Uterus (tissue), 4 donors: ENCODE measurements at regions of chr2 and their contacts with region 1.

Region 1: GRCh38 chr2:219160186-219161017 is at the start of gene NHEJ1:
- DNase-seq: peak; percentile 98 to 99
- H3K4me3 ChIP-seq: peak within 1 kb of the TSS; percentile 77 to 94
- H3K27ac ChIP-seq: peak within 1 kb of the TSS; percentile 94 to 98
- H3K4me1 ChIP-seq: peaks cover 0 to 4% of the 10 kb centered on the region in 2 donors
- H3K27me3 ChIP-seq: no peaks in the 10 kb centered on the region
- CTCF ChIP-seq: peak; percentile 97 to 100 (median 98)
- POLR2A ChIP-seq: peak; percentile 31 to 69
- total RNA-seq, gene NHEJ1: 15.0 to 162 (median 18.1) TPM

Region 2: GRCh38 chr2:218852911-218853667 is 307.3 kb before region 1 on chr2:
- intact Hi-C with region 1: no loop called
- DNase-seq: peak in 1 of 2 donors; percentile 27
- H3K4me3 ChIP-seq: no peak overlapping the region
- H3K27ac ChIP-seq: no peak overlapping the region
- H3K4me1 ChIP-seq: no peaks in the 10 kb centered on the region
- H3K27me3 ChIP-seq: peaks cover 0 to 5% of the 10 kb centered on the region in 2 donors
- CTCF ChIP-seq: peak; percentile 30 to 52 (median 42)
- POLR2A ChIP-seq: no peak

Region 3: DNA sequence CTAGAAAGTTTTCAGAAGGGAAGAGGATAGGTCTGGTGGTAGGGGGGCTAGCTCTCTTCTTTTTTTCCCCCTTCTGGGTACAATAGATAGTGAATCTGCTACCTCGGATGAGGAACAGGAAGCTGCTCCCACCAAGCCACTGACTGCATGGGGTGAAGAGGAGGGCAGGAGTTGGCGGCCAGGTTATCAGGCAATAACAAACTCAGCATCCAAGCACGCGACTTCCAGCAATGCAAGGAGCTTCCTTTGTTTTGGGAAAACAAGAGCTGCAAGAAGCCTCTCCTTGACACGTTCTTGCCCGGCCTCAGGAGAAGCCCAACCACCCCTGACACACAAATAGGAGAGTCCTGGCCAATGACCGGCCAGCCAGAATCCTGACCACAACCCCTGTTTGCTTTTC is 32.0 kb before region 1 on chr2:
- intact Hi-C with region 1: no loop called
- DNase-seq: no peak
- H3K4me3 ChIP-seq: no peak overlapping the region
- H3K27ac ChIP-seq: no peak overlapping the region
- H3K4me1 ChIP-seq: peaks cover 0 to 4% of the 10 kb centered on the region in 2 donors
- H3K27me3 ChIP-seq: no peaks in the 10 kb centered on the region
- CTCF ChIP-seq: no peak
- POLR2A ChIP-seq: no peak

Region 4: DNA sequence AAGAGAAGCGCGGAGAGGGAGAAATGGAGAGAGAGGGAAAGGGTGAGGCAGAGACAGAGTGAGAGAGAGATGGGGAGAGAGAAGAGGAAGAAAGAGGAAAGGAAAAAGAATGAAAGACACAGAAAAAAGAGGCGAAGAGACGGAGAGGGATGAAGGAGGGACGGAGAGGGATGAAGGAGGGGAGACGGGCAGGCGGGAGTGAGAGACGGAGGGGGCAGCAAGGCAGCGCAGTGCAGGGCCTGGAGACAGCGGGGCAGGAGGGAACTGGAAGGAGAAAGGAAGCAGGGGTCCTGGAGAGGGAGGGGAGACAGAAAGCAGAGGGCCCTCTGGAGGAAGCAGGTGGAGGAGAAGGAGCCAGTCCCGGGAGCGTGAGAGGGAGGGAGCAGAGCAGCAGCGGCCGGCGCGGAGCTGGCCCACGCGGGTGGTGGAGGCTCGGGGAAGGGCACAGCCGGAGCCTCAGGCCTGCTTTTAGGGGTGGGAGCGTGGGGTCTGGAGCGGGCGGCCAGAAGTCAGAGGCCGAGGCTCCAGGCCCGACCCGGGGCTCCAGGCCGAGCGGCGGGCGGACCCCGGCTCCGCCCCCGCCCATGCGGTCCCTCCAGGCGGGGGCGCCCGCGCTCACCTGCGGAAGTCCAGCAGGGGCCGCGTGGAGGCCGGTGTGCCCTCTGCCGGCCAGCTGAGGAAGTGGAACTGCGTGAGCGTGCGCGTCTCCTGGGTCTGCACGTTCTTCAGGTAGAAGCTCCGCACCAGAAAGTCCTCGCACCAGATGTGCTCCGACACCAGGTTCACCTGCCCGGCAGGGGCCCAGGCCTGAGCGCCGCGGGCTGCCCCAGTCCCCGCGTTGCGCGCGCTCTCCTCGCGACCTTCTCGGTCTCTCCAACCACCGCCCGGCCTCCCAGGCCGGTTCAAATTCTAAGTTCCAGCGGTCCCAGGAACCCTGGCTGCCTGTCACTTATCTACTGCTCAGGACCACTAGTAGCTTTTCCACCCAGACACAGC is 134.3 kb after region 1 on chr2:
- intact Hi-C with region 1: loop called (anchors 5 kb)
- DNase-seq: peak; percentile 82 to 88
- H3K4me3 ChIP-seq: peak overlapping the region; percentile 39 to 48
- H3K27ac ChIP-seq: peak overlapping the region; percentile 94 to 97
- H3K4me1 ChIP-seq: peaks cover 4% of the 10 kb centered on the region in 2 donors
- H3K27me3 ChIP-seq: no peaks in the 10 kb centered on the region
- CTCF ChIP-seq: peak; percentile 95 to 100 (median 100)
- POLR2A ChIP-seq: peak; percentile 31 to 75